ENCODE measurements at regions of chr10 and their contacts with region 1.

Region 1: GRCh38 chr10:96374985-96375830 is 16.4 kb upstream of the OPALIN start:
- H3K4me3 ChIP-seq: peak overlapping the region; percentile 26
- H3K27ac ChIP-seq: no peak overlapping the region; the same call in 1 of the 2 replicates
- H3K4me1 ChIP-seq: no peaks in the 10 kb centered on the region
- CTCF ChIP-seq: peak; percentile 99

Region 2: GRCh38 chr10:96334616-96335526 is 40.3 kb before region 1 on chr10:
- CTCF ChIA-PET with region 1: interaction called, 29 read pairs
- POLR2A ChIA-PET with region 1: no interaction called
- H3K4me3 ChIP-seq: no peak overlapping the region
- H3K27ac ChIP-seq: no peak overlapping the region
- H3K4me1 ChIP-seq: no peaks in the 10 kb centered on the region
- CTCF ChIP-seq: peak; percentile 23; the same call in 1 of the 2 replicates

Region 3: GRCh38 chr10:96339957-96340904 is 35.0 kb before region 1 on chr10:
- CTCF ChIA-PET with region 1: interaction called, 29 read pairs
- POLR2A ChIA-PET with region 1: no interaction called
- H3K4me3 ChIP-seq: no peak overlapping the region
- H3K27ac ChIP-seq: no peak overlapping the region
- H3K4me1 ChIP-seq: no peaks in the 10 kb centered on the region
- CTCF ChIP-seq: peak; percentile 52; the same call in 1 of the 2 replicates

Region 4: DNA sequence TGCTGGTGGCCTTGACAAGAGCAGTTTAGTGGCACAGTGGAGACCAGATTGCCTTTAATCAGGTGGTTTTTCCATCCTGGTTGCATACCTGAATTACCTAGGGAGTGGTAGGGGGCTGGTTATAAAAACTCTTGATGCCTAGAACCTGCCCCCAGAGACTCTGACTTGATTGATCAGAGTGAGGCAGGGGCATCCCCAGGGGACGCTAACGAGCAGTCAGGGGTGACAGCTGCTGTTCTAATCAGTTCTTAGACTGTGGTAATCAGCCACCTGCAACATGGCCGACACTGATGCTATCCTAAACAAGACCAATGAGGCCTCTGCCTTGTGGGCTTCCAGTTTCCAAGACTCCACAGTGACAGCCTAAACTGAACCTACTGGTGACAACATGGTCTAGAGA is 14.4 kb before region 1 on chr10:
- CTCF ChIA-PET with region 1: interaction called, 17 read pairs
- POLR2A ChIA-PET with region 1: no interaction called
- H3K4me3 ChIP-seq: no peak overlapping the region
- H3K27ac ChIP-seq: no peak overlapping the region
- H3K4me1 ChIP-seq: no peaks in the 10 kb centered on the region
- CTCF ChIP-seq: no peak

Region 5: DNA sequence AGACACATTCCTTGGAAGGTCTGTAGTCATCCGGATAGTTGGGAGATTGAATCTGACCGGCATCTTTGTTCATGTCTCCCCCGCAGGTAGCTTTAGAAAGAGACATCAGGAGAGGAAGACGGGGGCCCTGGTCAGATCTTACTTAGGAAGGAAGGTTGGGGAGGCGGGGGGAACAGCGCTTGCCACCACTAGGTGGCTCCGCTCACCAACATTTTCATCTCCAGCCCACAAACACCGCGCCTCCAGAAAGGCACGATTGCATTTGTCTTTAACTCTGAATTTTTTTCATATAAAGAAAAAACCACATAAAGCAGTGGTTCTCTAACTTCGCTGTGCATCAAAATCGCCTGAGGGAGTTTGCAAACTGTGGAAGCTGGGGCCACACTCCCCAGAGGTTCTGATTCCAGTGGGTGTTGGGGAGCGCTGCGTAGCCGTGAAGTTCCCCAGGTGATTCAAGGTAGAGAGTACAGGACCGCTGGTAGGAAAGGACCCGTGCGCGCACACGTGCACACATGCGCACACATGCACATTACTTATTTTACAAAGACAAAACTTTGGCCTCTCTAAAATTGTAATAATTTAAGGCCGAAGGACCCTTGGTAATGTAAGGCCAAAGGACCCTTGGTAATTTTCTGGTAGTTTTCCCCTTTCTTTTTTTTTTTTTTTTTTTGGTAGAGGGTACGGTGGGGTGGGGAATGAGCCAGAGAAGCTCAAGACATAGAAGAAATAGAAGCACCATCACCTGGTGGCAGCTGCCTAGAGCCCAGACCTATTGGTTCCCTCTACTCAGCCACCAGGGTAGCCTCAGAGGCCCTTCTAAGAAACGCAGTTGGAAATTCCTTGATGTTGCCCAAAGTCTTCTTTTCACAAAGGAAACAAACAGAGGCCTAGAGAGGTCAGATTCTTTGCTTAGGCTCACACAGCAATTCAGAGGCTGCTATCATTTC is 21.0 kb after region 1 on chr10:
- CTCF ChIA-PET with region 1: interaction called, 22 read pairs
- POLR2A ChIA-PET with region 1: no interaction called
- H3K4me3 ChIP-seq: no peak overlapping the region
- H3K27ac ChIP-seq: no peak overlapping the region
- H3K4me1 ChIP-seq: no peaks in the 10 kb centered on the region
- CTCF ChIP-seq: peak; percentile 68

Region 6: GRCh38 chr10:96642973-96643372 is 267.8 kb after region 1 on chr10:
- CTCF ChIA-PET with region 1: interaction called, 10 read pairs
- POLR2A ChIA-PET with region 1: no interaction called
- H3K4me3 ChIP-seq: no peak overlapping the region
- H3K27ac ChIP-seq: no peak overlapping the region
- H3K4me1 ChIP-seq: no peaks in the 10 kb centered on the region
- CTCF ChIP-seq: no peak